Left ventricle myocardium inferior (tissue), 1 donor: ENCODE measurements at regions of chr2 and their contacts with region 1.

Region 1: GRCh38 chr2:138827426-138828054 is 47.4 kb upstream of the NXPH2 start:
- DNase-seq: no peak
- H3K4me3 ChIP-seq: no peak overlapping the region
- H3K27ac ChIP-seq: no peak overlapping the region
- H3K4me1 ChIP-seq: no peaks in the 10 kb centered on the region
- H3K27me3 ChIP-seq: peaks cover 16% of the 10 kb centered on the region
- CTCF ChIP-seq: peak; percentile 83

Region 2: GRCh38 chr2:137910641-137911040 is 916.9 kb before region 1 on chr2:
- intact Hi-C with region 1: loop called (anchors 2 kb)
- DNase-seq: no peak
- H3K4me3 ChIP-seq: no peak overlapping the region
- H3K27ac ChIP-seq: no peak overlapping the region
- H3K4me1 ChIP-seq: no peaks in the 10 kb centered on the region
- H3K27me3 ChIP-seq: no peaks in the 10 kb centered on the region
- CTCF ChIP-seq: peak; percentile 75

Region 3: GRCh38 chr2:138877446-138877845 is 49.9 kb after region 1 on chr2:
- intact Hi-C with region 1: no loop called
- DNase-seq: no peak
- H3K4me3 ChIP-seq: no peak overlapping the region
- H3K27ac ChIP-seq: no peak overlapping the region
- H3K4me1 ChIP-seq: no peaks in the 10 kb centered on the region
- H3K27me3 ChIP-seq: no peaks in the 10 kb centered on the region
- CTCF ChIP-seq: no peak